ENCODE measurements at regions of chr7 and their contacts with region 1.

Region 1: GRCh38 chr7:99374103-99375064 is at the start of gene ARPC1B:
- DNase-seq: peak; percentile 78 to 91 (median 81)
- ATAC-seq: peak; percentile 51 to 59
- H3K4me3 Mint-ChIP-seq: peak within 1 kb of the TSS; percentile 79 to 91 (median 87)
- H3K27ac Mint-ChIP-seq: peak within 1 kb of the TSS; percentile 87 to 99 (median 98)
- H3K4me1 Mint-ChIP-seq: peaks cover 15 to 48% (median 47%) of the 10 kb centered on the region in 4 donors
- H3K27me3 Mint-ChIP-seq: no peaks in the 10 kb centered on the region
- polyA plus RNA-seq, gene ARPC1B: 597 to 712 (median 662) TPM

Region 2: DNA sequence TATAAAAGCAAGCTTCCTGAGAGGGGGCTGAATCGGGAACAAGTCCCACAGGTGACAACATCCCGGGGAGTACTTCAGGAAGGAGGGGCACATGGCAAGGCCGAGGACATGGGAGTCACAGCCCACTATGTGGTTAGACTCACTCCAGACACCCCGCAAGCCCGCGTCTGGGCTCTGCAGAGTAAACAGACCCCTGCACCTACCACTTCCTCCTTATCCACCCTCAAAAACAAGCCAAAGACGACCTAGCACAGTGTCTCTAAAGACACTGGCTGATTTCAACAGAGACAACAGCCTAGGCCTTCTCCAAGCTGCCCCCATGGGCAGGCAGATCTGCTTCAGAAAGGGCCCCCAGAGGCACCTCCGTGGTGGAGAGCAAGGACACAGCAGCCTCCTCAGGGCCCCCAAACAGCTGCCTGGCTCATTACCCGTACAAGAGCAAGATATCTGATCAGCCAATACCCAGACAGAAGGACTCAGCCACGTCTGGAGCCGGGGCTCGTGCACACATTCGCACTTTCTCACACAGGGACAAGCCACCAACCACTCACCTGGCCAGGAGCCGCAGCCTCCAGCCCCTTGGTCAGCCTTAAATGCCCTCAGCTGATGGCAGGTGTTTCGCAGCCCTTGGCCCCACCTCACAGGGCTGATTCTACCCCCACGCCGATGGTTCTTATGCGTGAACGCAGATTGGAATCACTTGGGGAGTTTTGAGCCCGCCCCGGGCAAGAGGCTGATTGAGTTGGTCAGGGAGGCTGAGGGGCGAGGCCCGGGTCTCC is 155.8 kb before region 1 on chr7:
- POLR2A ChIA-PET with region 1: no interaction called
- DNase-seq: peak in 6 of 10 donors; percentile 11 to 50 (median 34)
- ATAC-seq: peak; percentile 91 to 96
- H3K4me3 Mint-ChIP-seq: peak overlapping the region; percentile 32 to 82 (median 66)
- H3K27ac Mint-ChIP-seq: peak overlapping the region; percentile 93 to 99 (median 97)
- H3K4me1 Mint-ChIP-seq: peaks cover 12 to 33% (median 26%) of the 10 kb centered on the region in 4 donors
- H3K27me3 Mint-ChIP-seq: no peaks in the 10 kb centered on the region

Region 3: GRCh38 chr7:99386584-99387238 is 12.3 kb after region 1 on chr7:
- POLR2A ChIA-PET with region 1: interaction called, 95 read pairs
- DNase-seq: peak in 5 of 10 donors; percentile 48 to 73 (median 53)
- ATAC-seq: peak; percentile 74 to 87
- H3K4me3 Mint-ChIP-seq: peak overlapping the region in 1 of 10 donors; percentile 29
- H3K27ac Mint-ChIP-seq: peak overlapping the region; percentile 59 to 93 (median 84)
- H3K4me1 Mint-ChIP-seq: peaks cover 11 to 38% (median 27%) of the 10 kb centered on the region in 4 donors
- H3K27me3 Mint-ChIP-seq: no peaks in the 10 kb centered on the region

Region 4: DNA sequence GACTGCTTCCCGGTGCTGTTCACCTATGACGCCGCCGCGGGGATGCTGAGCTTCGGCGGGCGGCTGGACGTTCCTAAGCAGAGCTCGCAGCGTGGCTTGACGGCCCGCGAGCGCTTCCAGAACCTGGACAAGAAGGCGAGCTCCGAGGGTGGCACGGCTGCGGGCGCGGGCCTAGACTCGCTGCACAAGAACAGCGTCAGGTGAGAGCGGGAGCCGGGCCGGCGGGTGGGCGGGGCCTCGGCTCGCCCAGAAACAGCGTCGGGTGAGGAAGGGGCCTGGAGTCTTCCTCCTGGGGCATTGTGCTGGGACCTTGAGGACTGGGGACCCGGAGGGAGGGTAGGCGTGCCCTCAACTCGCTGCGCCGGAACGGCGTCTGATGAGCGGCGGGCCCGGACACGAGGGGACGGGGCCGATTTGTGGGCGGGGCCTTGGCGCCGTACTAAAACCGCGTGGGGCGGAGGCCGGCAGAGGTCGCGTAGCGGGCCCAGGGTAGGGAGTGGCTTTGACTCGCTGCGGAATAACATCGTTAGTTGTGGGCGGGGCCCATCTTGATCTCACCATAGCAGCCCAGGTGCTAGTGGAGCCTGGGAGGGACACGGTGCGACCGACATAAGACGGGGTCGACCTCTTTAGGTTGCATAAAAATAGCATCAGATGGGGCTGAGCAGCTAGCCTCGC is 18.4 kb after region 1 on chr7:
- POLR2A ChIA-PET with region 1: interaction called, 95 read pairs
- DNase-seq: peak; percentile 68 to 93 (median 84)
- ATAC-seq: peak; percentile 95 to 96
- H3K4me3 Mint-ChIP-seq: peak overlapping the region; percentile 77 to 93 (median 85)
- H3K27ac Mint-ChIP-seq: peak overlapping the region; percentile 80 to 97 (median 94)
- H3K4me1 Mint-ChIP-seq: peaks cover 1 to 26% (median 23%) of the 10 kb centered on the region in 4 donors
- H3K27me3 Mint-ChIP-seq: no peaks in the 10 kb centered on the region

Region 5: GRCh38 chr7:99398625-99399445 is 24.5 kb after region 1 on chr7:
- POLR2A ChIA-PET with region 1: interaction called, 95 read pairs
- DNase-seq: no peak
- ATAC-seq: peak in 1 of 2 donors; percentile 12
- H3K4me3 Mint-ChIP-seq: no peak overlapping the region
- H3K27ac Mint-ChIP-seq: peak overlapping the region; percentile 36 to 88 (median 70)
- H3K4me1 Mint-ChIP-seq: peaks cover 17 to 42% (median 27%) of the 10 kb centered on the region in 4 donors
- H3K27me3 Mint-ChIP-seq: no peaks in the 10 kb centered on the region

Region 6: GRCh38 chr7:99408379-99409191 is 34.2 kb after region 1 on chr7 and contains the starts of genes BUD31 and PDAP1:
- POLR2A ChIA-PET with region 1: interaction called, 102 read pairs
- DNase-seq: peak; percentile 79 to 100 (median 96)
- ATAC-seq: peak; percentile 82 to 84
- H3K4me3 Mint-ChIP-seq: peak within 1 kb of the TSS; percentile 91 to 100 (median 96)
- H3K27ac Mint-ChIP-seq: peak within 1 kb of the TSS; percentile 94 to 99 (median 98)
- H3K4me1 Mint-ChIP-seq: peaks cover 33 to 74% (median 55%) of the 10 kb centered on the region in 4 donors
- H3K27me3 Mint-ChIP-seq: no peaks in the 10 kb centered on the region
- polyA plus RNA-seq, gene BUD31: 151 to 216 (median 170) TPM
- polyA plus RNA-seq, gene PDAP1: 24.0 to 35.6 (median 33.4) TPM

Region 7: DNA sequence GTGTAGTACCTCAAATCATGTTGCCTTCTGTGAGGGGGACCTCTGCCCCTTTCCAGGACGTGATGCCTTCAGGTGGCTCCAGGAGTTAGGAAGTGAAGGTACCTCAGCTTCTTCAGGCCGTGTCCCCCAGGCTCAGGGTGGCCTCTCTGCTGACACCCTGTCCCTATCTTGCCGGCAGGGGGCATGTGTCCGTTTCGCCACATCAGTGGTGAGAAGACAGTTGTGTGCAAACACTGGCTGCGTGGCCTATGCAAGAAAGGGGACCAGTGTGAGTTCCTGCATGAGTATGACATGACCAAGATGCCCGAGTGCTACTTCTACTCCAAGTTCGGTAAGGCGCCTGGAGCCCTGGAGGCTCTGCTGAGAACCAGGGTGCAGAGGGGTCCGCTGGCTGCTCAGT is 73.6 kb after region 1 on chr7:
- POLR2A ChIA-PET with region 1: no interaction called
- DNase-seq: no peak
- ATAC-seq: no peak
- H3K4me3 Mint-ChIP-seq: no peak overlapping the region
- H3K27ac Mint-ChIP-seq: no peak overlapping the region
- H3K4me1 Mint-ChIP-seq: peaks cover 5 to 17% (median 8%) of the 10 kb centered on the region in 4 donors
- H3K27me3 Mint-ChIP-seq: no peaks in the 10 kb centered on the region

Region 8: GRCh38 chr7:99740573-99741440 is 366.4 kb after region 1 on chr7:
- POLR2A ChIA-PET with region 1: no interaction called
- DNase-seq: no peak
- ATAC-seq: no peak
- H3K4me3 Mint-ChIP-seq: no peak overlapping the region
- H3K27ac Mint-ChIP-seq: peak overlapping the region in 2 of 10 donors; percentile 22 to 29
- H3K4me1 Mint-ChIP-seq: no peaks in the 10 kb centered on the region
- H3K27me3 Mint-ChIP-seq: peaks cover 2 to 9% (median 5%) of the 10 kb centered on the region in 5 donors